Activated CD4-positive, alpha-beta T cell treated with anti-CD3 and anti-CD28 coated beads, Interleukin-2, amount 10 ng/mL, durations not matched to agents 24 days and 14 days (primary cell): ENCODE measurements at regions of chr6 and their contacts with region 1.

Region 1: DNA sequence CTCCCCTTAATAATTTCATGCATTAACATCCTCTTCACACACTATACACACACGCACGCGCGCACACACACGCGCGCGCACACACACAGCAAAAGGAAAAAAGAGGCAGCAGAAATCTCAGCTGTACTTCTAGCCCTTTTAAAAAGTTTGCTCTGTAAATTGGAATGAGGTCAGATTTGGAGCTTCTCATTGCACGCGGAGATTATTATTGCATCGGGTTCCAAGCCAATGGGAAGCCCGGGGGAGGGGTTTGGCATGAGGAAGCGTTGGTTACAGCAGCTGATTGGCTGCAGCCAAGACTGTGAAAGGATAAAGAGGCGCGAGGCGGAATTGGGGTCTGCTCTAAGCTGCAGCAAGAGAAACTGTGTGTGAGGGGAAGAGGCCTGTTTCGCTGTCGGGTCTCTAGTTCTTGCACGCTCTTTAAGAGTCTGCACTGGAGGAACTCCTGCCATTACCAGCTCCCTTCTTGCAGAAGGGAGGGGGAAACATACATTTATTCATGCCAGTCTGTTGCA is at the start of gene SOX4:
- DNase-seq: peak; percentile 88
- H3K4me3 Mint-ChIP-seq: peak within 1 kb of the TSS; percentile 83
- H3K27ac Mint-ChIP-seq: peak within 1 kb of the TSS; percentile 85
- H3K4me1 Mint-ChIP-seq: peaks cover 21% of the 10 kb centered on the region
- H3K27me3 Mint-ChIP-seq: peaks cover 45% of the 10 kb centered on the region
- total RNA-seq, gene SOX4: 0.79 and 0.95 TPM in 2 replicates

Region 2: DNA sequence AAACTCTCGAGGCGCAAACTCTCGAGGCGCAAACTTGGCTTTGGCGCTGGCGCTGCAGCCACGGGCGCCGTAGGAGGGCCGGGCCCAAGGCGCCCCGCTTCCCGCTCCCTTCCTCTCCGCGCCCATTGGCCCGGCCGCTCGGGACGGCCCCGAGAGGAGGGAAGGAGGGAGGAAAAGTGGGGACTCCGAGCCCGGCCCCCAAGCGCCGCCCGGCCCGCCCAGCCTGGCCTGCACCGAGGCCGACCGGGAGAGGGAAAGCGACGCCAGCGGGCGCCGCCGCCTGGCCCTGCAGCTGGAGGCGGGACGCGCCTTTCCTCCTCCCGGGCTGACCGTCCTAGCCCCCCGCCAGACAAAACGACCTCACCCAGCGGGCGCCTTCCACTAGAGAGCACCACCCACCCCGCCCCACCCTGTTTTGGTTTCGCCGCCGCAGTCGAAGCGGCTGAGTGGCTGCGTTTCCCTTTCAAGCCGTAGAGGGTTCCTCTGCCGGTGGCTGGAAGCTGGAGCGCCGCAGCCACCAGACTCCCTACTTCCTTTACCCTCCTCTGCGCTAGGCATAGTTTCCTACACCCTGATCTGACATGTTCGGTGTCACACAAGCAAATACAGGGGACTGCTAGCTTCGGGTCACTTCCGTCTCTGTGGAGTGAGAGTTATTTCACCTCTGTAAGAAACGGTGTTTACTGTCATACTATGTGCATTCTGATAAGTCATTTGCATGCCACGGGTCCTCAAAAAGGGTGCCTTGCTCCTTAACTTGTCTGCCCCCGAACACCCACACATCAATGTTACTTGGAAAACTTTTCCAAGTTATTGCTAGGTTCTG is 1380.9 kb before region 1 on chr6 and contains the start of gene MBOAT1:
- intact Hi-C with region 1: loop called (anchors 5 kb)
- DNase-seq: peak; percentile 94
- H3K4me3 Mint-ChIP-seq: peak within 1 kb of the TSS; percentile 91
- H3K27ac Mint-ChIP-seq: peak within 1 kb of the TSS; percentile 91
- H3K4me1 Mint-ChIP-seq: peaks cover 38% of the 10 kb centered on the region
- H3K27me3 Mint-ChIP-seq: peaks cover 2% of the 10 kb centered on the region
- total RNA-seq, gene MBOAT1: 11.8 and 12.8 TPM in 2 replicates

Region 3: DNA sequence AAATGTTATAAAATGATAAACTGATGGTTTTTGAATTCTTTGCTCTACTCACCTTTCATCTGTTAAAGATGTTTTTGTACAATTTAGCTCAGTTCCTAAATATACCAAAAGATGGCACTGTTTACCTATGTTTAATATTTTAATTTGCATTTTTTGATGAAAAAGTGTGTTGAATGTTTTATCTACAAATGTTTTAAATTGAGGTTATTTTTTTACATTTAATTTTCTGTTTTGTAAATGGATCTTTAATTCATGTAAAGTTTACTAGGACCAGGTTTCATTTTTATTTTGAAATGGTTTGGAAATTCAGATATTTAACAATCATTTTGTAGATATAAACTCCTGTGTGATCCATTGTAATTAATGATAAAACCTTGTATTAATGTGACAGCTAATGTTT is 1029.2 kb before region 1 on chr6:
- intact Hi-C with region 1: loop called (anchors 1 kb)
- DNase-seq: no peak
- H3K4me3 Mint-ChIP-seq: no peak overlapping the region
- H3K27ac Mint-ChIP-seq: no peak overlapping the region
- H3K4me1 Mint-ChIP-seq: peaks cover 8% of the 10 kb centered on the region
- H3K27me3 Mint-ChIP-seq: no peaks in the 10 kb centered on the region

Region 4: GRCh38 chr6:21438237-21438985 is 155.1 kb before region 1 on chr6:
- intact Hi-C with region 1: loop called (anchors 2 kb)
- DNase-seq: peak; percentile 79
- H3K4me3 Mint-ChIP-seq: peak overlapping the region; percentile 66
- H3K27ac Mint-ChIP-seq: peak overlapping the region; percentile 76
- H3K4me1 Mint-ChIP-seq: peaks cover 15% of the 10 kb centered on the region
- H3K27me3 Mint-ChIP-seq: peaks cover 25% of the 10 kb centered on the region

Region 5: DNA sequence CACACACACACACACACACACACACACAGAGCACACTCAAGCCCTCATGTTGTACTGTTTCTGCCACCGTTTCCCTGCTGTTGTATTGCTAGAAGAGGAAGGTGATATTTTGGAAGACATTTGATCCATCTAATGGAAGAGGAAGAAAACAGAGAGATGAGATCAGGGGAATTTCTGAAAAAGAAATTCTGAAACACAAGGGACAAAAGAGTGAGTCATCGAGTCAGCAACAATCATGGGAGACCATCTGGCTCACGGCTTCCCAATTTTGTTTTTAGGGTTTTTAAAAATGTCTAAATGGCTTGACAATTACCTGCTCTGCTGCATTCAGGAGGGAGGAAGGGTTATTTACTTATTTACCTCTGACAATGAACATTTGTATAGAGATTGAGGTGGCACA is 22.0 kb after region 1 on chr6:
- intact Hi-C with region 1: no loop called
- DNase-seq: no peak
- H3K4me3 Mint-ChIP-seq: no peak overlapping the region
- H3K27ac Mint-ChIP-seq: no peak overlapping the region
- H3K4me1 Mint-ChIP-seq: no peaks in the 10 kb centered on the region
- H3K27me3 Mint-ChIP-seq: peaks cover 3% of the 10 kb centered on the region

Region 6: GRCh38 chr6:21873562-21873961 is 280.1 kb after region 1 on chr6:
- intact Hi-C with region 1: loop called (anchors 5 kb)
- DNase-seq: no peak
- H3K4me3 Mint-ChIP-seq: no peak overlapping the region
- H3K27ac Mint-ChIP-seq: no peak overlapping the region
- H3K4me1 Mint-ChIP-seq: peaks cover 32% of the 10 kb centered on the region
- H3K27me3 Mint-ChIP-seq: no peaks in the 10 kb centered on the region

Region 7: GRCh38 chr6:22145823-22146677 is 552.6 kb after region 1 on chr6:
- intact Hi-C with region 1: loop called (anchors 5 kb)
- DNase-seq: peak; percentile 56
- H3K4me3 Mint-ChIP-seq: peak overlapping the region; percentile 87
- H3K27ac Mint-ChIP-seq: no peak overlapping the region
- H3K4me1 Mint-ChIP-seq: peaks cover 10% of the 10 kb centered on the region
- H3K27me3 Mint-ChIP-seq: peaks cover 40% of the 10 kb centered on the region